ENCODE measurements at regions of chr16 and their contacts with region 1.

Region 1: DNA sequence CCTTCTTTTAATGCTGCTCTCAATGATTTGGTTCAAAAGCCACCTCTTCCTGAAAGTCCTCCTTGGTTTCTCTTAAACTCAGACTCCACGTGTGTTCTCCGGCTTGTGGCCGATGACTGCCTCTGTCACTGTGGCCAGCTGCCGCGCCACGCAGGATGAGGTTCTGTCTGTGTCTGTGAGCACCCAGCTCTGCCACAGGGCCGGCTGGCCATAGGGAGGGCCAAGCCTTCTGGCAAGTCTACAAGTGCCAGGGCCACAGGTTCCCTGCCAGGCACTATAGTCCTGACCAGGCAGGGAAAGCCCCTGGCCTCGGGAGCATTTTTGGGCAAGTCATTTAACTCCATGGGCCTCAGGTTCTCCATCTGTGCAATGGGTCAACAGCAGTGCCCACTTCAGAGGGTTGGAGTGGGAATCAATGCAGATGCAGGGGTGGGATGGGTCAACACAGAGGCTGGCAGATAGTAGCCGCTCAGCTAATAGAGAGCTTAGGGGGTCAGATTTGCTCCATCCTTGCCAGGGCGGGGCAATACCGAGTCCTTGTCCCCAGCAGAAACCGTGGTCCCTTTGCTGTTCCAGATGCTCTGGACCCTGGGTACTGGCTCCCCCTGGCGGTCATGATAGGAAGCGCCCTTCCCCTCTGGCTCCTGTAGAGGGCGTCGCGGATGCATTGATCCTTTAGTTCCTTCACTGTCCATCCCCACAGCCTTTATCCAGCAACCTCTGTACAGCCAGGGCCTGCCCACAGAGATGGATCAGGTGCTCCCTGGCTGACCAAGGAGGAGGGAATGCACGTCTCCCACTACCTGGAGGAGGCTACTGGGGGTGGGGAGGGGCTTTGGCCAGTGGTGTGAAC is 19.3 kb upstream of the ADGRG3 start:
- DNase-seq: peak; percentile 94
- ATAC-seq: peak; percentile 73
- H3K4me3 Mint-ChIP-seq: no peak overlapping the region
- H3K27ac Mint-ChIP-seq: peak overlapping the region; percentile 86
- H3K4me1 Mint-ChIP-seq: peaks cover 33% of the 10 kb centered on the region
- H3K27me3 Mint-ChIP-seq: no peaks in the 10 kb centered on the region
- CTCF ChIP-seq: peak; percentile 100

Region 2: GRCh38 chr16:57555831-57556230 is 93.0 kb before region 1 on chr16:
- CTCF ChIA-PET with region 1: interaction called, 10 read pairs
- POLR2A ChIA-PET with region 1: no interaction called
- intact Hi-C with region 1: no loop called
- DNase-seq: no peak
- ATAC-seq: peak; percentile 45
- H3K4me3 Mint-ChIP-seq: no peak overlapping the region
- H3K27ac Mint-ChIP-seq: no peak overlapping the region
- H3K4me1 Mint-ChIP-seq: peaks cover 17% of the 10 kb centered on the region
- H3K27me3 Mint-ChIP-seq: no peaks in the 10 kb centered on the region
- CTCF ChIP-seq: no peak

Region 3: GRCh38 chr16:57591086-57591869 is 57.5 kb before region 1 on chr16:
- CTCF ChIA-PET with region 1: interaction called, 101 read pairs
- POLR2A ChIA-PET with region 1: interaction called, 44 read pairs
- intact Hi-C with region 1: loop called (anchors 5 kb)
- DNase-seq: peak; percentile 94
- ATAC-seq: peak; percentile 81
- H3K4me3 Mint-ChIP-seq: peak overlapping the region; percentile 77
- H3K27ac Mint-ChIP-seq: peak overlapping the region; percentile 98
- H3K4me1 Mint-ChIP-seq: peaks cover 49% of the 10 kb centered on the region
- H3K27me3 Mint-ChIP-seq: no peaks in the 10 kb centered on the region
- CTCF ChIP-seq: peak; percentile 94

Region 4: GRCh38 chr16:57609541-57610401 is 39.0 kb before region 1 on chr16:
- CTCF ChIA-PET with region 1: interaction called, 127 read pairs
- POLR2A ChIA-PET with region 1: interaction called, 33 read pairs
- intact Hi-C with region 1: no loop called
- DNase-seq: peak; percentile 95
- ATAC-seq: peak; percentile 93
- H3K4me3 Mint-ChIP-seq: peak overlapping the region; percentile 49
- H3K27ac Mint-ChIP-seq: peak overlapping the region; percentile 93
- H3K4me1 Mint-ChIP-seq: peaks cover 68% of the 10 kb centered on the region
- H3K27me3 Mint-ChIP-seq: no peaks in the 10 kb centered on the region
- CTCF ChIP-seq: no peak

Region 5: GRCh38 chr16:57628008-57628781 is 20.6 kb before region 1 on chr16 and contains the start of gene ADGRG1:
- CTCF ChIA-PET with region 1: interaction called, 74 read pairs
- POLR2A ChIA-PET with region 1: interaction called, 4 read pairs
- intact Hi-C with region 1: no loop called
- DNase-seq: peak; percentile 89
- ATAC-seq: peak; percentile 97
- H3K4me3 Mint-ChIP-seq: peak within 1 kb of the TSS; percentile 61
- H3K27ac Mint-ChIP-seq: peak within 1 kb of the TSS; percentile 57
- H3K4me1 Mint-ChIP-seq: peaks cover 14% of the 10 kb centered on the region
- H3K27me3 Mint-ChIP-seq: peaks cover 9% of the 10 kb centered on the region
- CTCF ChIP-seq: no peak
- total RNA-seq, gene ADGRG1: 4.9 to 8.5 TPM

Region 6: GRCh38 chr16:57734925-57735754 is 86.3 kb after region 1 on chr16:
- CTCF ChIA-PET with region 1: interaction called, 18 read pairs
- POLR2A ChIA-PET with region 1: interaction called, 4 read pairs
- intact Hi-C with region 1: no loop called
- DNase-seq: peak; percentile 99
- ATAC-seq: peak; percentile 93
- H3K4me3 Mint-ChIP-seq: peak overlapping the region; percentile 99
- H3K27ac Mint-ChIP-seq: peak overlapping the region; percentile 98
- H3K4me1 Mint-ChIP-seq: peaks cover 18% of the 10 kb centered on the region
- H3K27me3 Mint-ChIP-seq: no peaks in the 10 kb centered on the region
- CTCF ChIP-seq: no peak